Dorsolateral prefrontal cortex (tissue), 120 donors: ENCODE measurements at regions of chr2 and their contacts with region 1.

Region 1: DNA sequence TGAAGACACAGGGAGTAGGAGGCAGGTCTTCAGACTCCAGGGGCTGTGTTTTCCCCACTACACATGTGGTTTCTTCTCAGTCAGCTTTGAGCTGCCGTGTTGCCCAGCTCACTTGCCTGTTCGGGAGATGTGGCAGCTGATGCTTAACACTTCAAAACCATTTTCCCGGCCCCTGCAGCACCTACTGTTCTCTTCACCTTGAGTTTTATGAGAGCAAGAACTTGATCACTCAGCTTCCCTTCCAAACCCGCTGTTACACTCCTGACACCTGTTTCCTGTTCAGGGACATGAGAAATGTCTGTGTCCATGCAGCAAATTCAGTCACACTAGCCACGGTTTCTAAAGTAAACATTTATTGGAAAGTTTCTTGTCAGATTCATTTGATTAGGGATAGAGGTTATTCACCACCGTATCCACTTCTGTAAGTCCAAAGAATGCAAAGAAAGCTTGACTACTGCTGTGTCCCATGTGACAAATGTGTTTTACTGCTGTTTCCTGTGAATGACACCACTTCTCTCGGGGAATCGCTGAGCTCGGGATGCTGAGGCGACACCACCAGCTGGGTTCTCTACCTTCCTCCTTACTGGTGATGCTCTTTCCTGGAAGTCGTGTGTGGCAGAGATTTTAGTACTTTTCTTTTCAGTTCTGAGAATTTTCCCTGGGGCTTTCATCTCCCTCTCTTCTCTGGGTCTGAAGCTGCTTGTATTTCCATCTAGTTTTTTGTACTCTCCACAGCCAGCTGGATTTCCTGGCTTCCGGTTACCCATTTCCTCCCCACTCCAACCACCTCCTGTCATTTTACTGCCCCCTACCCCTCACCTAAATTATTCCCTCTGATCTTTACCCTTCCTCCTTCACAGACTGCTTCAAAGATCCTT is 91.7 kb downstream of the KLF7 start:
- DNase-seq: peak in 1 of 10 donors; percentile 24
- H3K4me3 ChIP-seq: peak overlapping the region in 55 of 59 donors; percentile 0 to 65 (median 42)
- H3K27ac ChIP-seq: peak overlapping the region; percentile 30 to 97 (median 88)
- H3K27me3 ChIP-seq: no peaks in the 10 kb centered on the region
- CTCF ChIP-seq: peak in 36 of 56 donors; percentile 10 to 54 (median 31)

Region 2: GRCh38 chr2:207113414-207113813 is 39.4 kb after region 1 on chr2:
- intact Hi-C with region 1: loop called (anchors 1 to 5 kb)
- DNase-seq: peak in 9 of 10 donors; percentile 30 to 77 (median 60)
- H3K4me3 ChIP-seq: peak overlapping the region in 7 of 59 donors; percentile 2 to 31 (median 16)
- H3K27ac ChIP-seq: peak overlapping the region; percentile 59 to 96 (median 88)
- H3K27me3 ChIP-seq: no peaks in the 10 kb centered on the region
- CTCF ChIP-seq: peak in 1 of 56 donors; percentile 18

Region 3: GRCh38 chr2:207223051-207223450 is 149.0 kb after region 1 on chr2:
- intact Hi-C with region 1: no loop called
- DNase-seq: no peak
- H3K4me3 ChIP-seq: no peak overlapping the region
- H3K27ac ChIP-seq: no peak overlapping the region
- H3K27me3 ChIP-seq: no peaks in the 10 kb centered on the region
- CTCF ChIP-seq: no peak